GM12878 (cell line): ENCODE measurements at regions of chr16 and their contacts with region 1.

Region 1: DNA sequence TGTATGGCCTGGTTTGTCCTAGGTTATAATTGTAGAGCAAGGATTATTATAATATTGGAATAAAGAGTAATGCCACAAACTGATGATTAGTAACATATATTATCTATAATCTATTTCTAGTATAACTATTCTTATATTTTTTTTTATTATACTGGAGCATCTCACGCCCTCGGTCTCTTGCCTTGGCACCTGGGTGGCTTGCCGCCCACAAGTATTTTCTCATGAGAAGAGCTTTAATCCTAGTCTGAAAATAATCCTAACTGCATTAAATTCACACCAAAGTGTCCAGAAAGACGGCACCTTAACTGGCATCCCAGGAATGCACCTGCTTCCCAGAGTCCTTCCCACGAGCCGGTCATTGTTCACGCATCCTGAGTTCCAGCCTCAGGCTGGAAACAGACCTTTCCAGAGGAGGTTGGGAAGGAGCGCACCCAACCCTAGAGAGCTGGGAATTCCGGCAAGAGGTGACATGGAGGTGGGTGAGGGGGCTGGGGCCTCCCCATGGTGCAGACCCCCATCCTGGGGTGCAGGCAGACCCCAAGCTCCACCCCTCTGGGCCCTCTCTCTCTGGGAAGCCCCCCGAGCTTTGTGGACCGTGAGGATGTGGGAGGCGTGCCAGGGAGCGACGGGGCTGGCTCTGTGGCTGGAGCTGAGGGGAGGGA is 15.9 kb downstream of the CHMP1A start:
- DNase-seq: no peak
- ATAC-seq: no peak
- H3K4me3 ChIP-seq: no peak overlapping the region
- H3K27ac ChIP-seq: no peak overlapping the region
- H3K4me1 ChIP-seq: no peaks in the 10 kb centered on the region
- H3K27me3 ChIP-seq: no peaks in the 10 kb centered on the region
- CTCF ChIP-seq: no peak
- EP300 ChIP-seq: no peak
- POLR2A ChIP-seq: no peak
- RAD21 ChIP-seq: no peak

Region 2: GRCh38 chr16:89574681-89575246 is 66.8 kb before region 1 on chr16:
- CTCF ChIA-PET with region 1: interaction called, 4 read pairs
- POLR2A ChIA-PET with region 1: no interaction called
- RAD21 ChIA-PET with region 1: no interaction called
- SMC1A ChIA-PET with region 1: no interaction called
- in situ Hi-C with region 1: no loop called
- intact Hi-C with region 1: loop called (anchors 2 kb)
- DNase-seq: no peak
- ATAC-seq: peak; percentile 91
- H3K4me3 ChIP-seq: peak overlapping the region; percentile 58
- H3K27ac ChIP-seq: no peak overlapping the region
- H3K4me1 ChIP-seq: peaks cover 15% of the 10 kb centered on the region
- H3K27me3 ChIP-seq: no peaks in the 10 kb centered on the region; a peak in 1 of 4 replicates
- CTCF ChIP-seq: peak; percentile 66 to 84 (median 73); a peak in 5 of 6 replicates
- EP300 ChIP-seq: no peak
- POLR2A ChIP-seq: no peak
- RAD21 ChIP-seq: peak; percentile 71